ENCODE measurements at regions of chr18 and their contacts with region 1.

Region 1: GRCh38 chr18:32158108-32158624 is 31.7 kb upstream of the MEP1B start:
- DNase-seq: peak; percentile 84 to 89
- ATAC-seq: peak; percentile 96
- H3K4me3 ChIP-seq: peak overlapping the region; percentile 42 to 52
- H3K27ac ChIP-seq: no peak overlapping the region
- H3K4me1 ChIP-seq: no peaks in the 10 kb centered on the region
- H3K27me3 ChIP-seq: no peaks in the 10 kb centered on the region

Region 2: DNA sequence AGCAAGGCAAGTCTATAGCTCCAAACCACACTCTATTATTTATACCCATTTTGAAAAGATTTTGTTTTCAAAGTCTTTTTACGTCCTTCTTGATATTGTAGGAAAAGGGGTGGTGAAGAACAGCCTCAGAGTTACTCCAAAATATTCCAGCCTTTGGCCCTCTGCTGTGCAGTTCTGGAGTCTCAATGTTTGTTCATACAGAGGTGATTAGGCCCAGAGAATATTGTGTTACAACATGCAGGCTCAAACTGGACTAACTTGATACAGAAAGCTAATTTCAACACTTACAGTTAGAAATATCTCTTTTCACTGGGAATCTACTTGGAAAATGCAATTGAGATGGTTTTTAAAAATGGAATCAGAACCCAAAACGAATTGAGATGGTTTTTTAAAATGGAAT is 357.1 kb before region 1 on chr18:
- intact Hi-C with region 1: no loop called
- DNase-seq: no peak
- ATAC-seq: no peak
- H3K4me3 ChIP-seq: no peak overlapping the region
- H3K27ac ChIP-seq: no peak overlapping the region
- H3K4me1 ChIP-seq: no peaks in the 10 kb centered on the region
- H3K27me3 ChIP-seq: no peaks in the 10 kb centered on the region

Region 3: GRCh38 chr18:32271672-32272208 is 113.6 kb after region 1 on chr18:
- intact Hi-C with region 1: loop called in 1 of 2 experiments (anchors 2 kb)
- DNase-seq: no peak
- ATAC-seq: peak; percentile 71
- H3K4me3 ChIP-seq: no peak overlapping the region
- H3K27ac ChIP-seq: no peak overlapping the region
- H3K4me1 ChIP-seq: peaks cover 0 to 5% of the 10 kb centered on the region in 2 donors
- H3K27me3 ChIP-seq: no peaks in the 10 kb centered on the region

Region 4: GRCh38 chr18:32480581-32480980 is 322.4 kb after region 1 on chr18:
- intact Hi-C with region 1: loop called in 1 of 2 experiments (anchors 2 kb)
- DNase-seq: no peak
- ATAC-seq: no peak
- H3K4me3 ChIP-seq: no peak overlapping the region
- H3K27ac ChIP-seq: no peak overlapping the region
- H3K4me1 ChIP-seq: no peaks in the 10 kb centered on the region
- H3K27me3 ChIP-seq: no peaks in the 10 kb centered on the region

Region 5: DNA sequence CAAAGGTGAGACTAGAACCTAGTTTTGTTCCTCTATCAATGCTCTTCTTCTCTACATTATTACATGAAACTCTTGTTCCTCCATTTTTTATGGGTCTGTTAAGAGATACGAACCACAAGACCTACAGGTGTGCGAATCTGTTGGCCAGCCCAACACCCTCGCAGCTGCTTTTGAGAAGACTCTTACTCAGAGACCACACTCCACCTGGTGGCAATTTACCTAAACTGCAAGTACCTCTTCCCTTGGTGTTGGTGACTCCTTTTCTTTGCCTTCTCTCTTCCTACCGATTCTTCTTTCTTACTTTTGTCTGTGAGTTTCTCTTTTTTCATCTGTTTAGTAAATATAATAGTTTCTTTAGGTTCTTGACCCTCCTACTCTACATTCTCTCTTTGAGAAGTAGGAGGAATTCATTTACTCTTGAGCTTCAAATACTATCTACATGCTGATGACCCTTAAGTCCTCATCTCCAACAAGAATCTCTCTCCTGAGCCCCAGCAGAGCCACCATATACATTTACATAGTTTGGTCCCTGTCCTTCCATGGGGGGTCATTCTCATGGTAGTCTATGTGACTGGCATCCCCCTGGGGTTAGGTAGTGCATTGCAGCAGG is 394.4 kb after region 1 on chr18:
- intact Hi-C with region 1: loop called (anchors 1 to 2 kb)
- DNase-seq: no peak
- ATAC-seq: peak; percentile 72
- H3K4me3 ChIP-seq: no peak overlapping the region
- H3K27ac ChIP-seq: no peak overlapping the region
- H3K4me1 ChIP-seq: no peaks in the 10 kb centered on the region
- H3K27me3 ChIP-seq: no peaks in the 10 kb centered on the region